CD8-positive, alpha-beta memory T cell (primary cell): ENCODE measurements at regions of chr7 and their contacts with region 1.

Region 1: GRCh38 chr7:143263266-143264195 is at the start of gene GSTK1:
- DNase-seq: peak; percentile 70 to 88 (median 78)
- H3K4me3 ChIP-seq: peak within 1 kb of the TSS; percentile 95
- H3K4me3 Mint-ChIP-seq: peak within 1 kb of the TSS; percentile 88 to 99 (median 97)
- H3K27ac ChIP-seq: peak within 1 kb of the TSS; percentile 83
- H3K27ac Mint-ChIP-seq: peak within 1 kb of the TSS; percentile 63 to 98 (median 94)
- H3K4me1 ChIP-seq: peaks cover 37% of the 10 kb centered on the region
- H3K4me1 Mint-ChIP-seq: peaks cover 49 to 84% (median 66%) of the 10 kb centered on the region in 3 donors
- H3K27me3 ChIP-seq: no peaks in the 10 kb centered on the region
- H3K27me3 Mint-ChIP-seq: no peaks in the 10 kb centered on the region
- total RNA-seq, gene GSTK1: 147 to 151 TPM

Region 2: DNA sequence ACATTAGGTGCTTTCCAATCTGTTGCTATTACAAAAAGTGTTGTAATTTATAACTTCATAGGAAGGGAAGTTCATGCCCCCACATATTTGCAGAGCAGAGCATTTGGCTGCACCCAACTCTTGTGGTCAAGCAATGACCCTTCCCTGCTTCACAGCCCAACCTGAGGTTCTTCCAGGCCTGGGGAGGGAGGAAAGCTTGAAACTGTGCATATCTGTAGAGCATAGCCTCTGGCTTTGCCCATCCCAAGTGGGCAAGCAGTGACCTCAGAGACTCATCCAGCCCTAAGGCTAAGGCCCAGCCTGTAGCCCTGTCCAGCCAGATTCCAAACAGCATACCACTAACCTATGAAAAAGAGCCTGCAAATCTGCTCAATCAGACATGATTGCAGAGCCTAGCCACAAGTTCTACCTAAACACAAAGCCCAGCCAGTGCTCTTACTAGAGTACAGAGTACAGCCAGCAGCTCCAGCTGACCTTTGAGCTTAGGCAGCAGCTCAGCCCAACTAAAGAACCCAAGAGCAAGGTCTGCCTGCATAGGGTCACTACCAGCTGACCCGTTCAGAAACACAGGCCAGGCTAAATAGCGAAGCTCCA is 14.7 kb before region 1 on chr7:
- CTCF ChIA-PET with region 1: interaction called, 69 read pairs
- POLR2A ChIA-PET with region 1: interaction called, 10 read pairs
- DNase-seq: no peak
- H3K4me3 ChIP-seq: no peak overlapping the region
- H3K4me3 Mint-ChIP-seq: peak overlapping the region in 3 of 7 donors; percentile 12 to 19 (median 19)
- H3K27ac ChIP-seq: no peak overlapping the region
- H3K27ac Mint-ChIP-seq: peak overlapping the region in 5 of 8 donors; percentile 23 to 86 (median 60)
- H3K4me1 ChIP-seq: peaks cover 72% of the 10 kb centered on the region
- H3K4me1 Mint-ChIP-seq: peaks cover 84 to 99% (median 97%) of the 10 kb centered on the region in 3 donors
- H3K27me3 ChIP-seq: no peaks in the 10 kb centered on the region
- H3K27me3 Mint-ChIP-seq: no peaks in the 10 kb centered on the region

Region 3: GRCh38 chr7:143279186-143280098 is 15.9 kb after region 1 on chr7:
- CTCF ChIA-PET with region 1: interaction called, 12 read pairs
- POLR2A ChIA-PET with region 1: interaction called, 7 read pairs
- DNase-seq: peak in 2 of 5 donors; percentile 26 to 41
- H3K4me3 ChIP-seq: peak overlapping the region; percentile 8
- H3K4me3 Mint-ChIP-seq: peak overlapping the region; percentile 34 to 85 (median 73)
- H3K27ac ChIP-seq: peak overlapping the region; percentile 33
- H3K27ac Mint-ChIP-seq: peak overlapping the region; percentile 82 to 96 (median 90)
- H3K4me1 ChIP-seq: peaks cover 27% of the 10 kb centered on the region
- H3K4me1 Mint-ChIP-seq: peaks cover 33 to 43% (median 34%) of the 10 kb centered on the region in 3 donors
- H3K27me3 ChIP-seq: no peaks in the 10 kb centered on the region
- H3K27me3 Mint-ChIP-seq: no peaks in the 10 kb centered on the region

Region 4: DNA sequence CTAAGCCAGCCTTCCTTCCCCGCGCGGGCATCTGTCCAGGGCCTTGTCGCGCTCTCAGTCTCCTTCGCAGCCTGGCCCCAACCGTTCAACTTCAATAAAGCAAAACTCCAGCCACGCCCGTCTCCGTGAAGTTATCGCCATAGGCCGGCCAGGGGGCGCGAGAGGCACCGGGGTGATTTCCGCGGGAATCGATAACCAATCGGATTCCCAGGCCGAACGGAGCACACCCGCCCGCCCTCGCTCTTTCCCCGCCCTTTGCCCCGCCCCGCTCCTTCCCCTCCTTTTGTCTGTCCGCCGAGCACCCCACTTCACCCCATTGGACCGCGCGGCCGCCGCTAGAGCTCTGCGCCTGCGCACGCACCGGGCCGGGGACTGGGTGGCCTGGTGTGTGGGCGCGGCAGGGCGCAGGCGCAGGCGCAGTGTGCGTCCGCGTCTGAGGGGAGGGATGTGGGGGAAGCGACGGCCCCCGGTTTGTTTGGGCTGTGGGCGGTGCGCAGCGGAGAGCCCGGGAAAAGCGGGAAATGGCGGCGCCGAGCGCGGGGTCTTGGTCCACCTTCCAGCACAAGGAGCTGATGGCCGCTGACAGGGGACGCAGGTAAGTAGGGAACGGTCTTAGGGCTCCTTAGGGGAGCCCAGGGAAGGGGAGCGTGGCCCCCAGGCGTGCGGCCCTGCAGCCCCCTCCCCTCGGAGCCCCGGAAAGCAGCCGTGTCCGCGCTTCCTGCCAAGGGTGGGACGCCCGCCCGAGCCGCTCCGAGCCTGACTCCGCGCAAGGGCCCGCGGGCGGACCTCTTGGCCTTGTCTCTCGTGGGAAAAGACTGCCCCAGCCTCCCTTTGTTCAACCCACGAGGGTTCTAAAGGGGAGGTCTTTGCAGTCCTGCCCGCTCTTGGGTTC is 24.6 kb after region 1 on chr7 and contains the start of gene CASP2:
- CTCF ChIA-PET with region 1: interaction called, 12 read pairs
- POLR2A ChIA-PET with region 1: interaction called, 9 read pairs
- DNase-seq: peak; percentile 98 to 100 (median 99)
- H3K4me3 ChIP-seq: peak within 1 kb of the TSS; percentile 59
- H3K4me3 Mint-ChIP-seq: peak within 1 kb of the TSS; percentile 88 to 99 (median 95)
- H3K27ac ChIP-seq: peak within 1 kb of the TSS; percentile 83
- H3K27ac Mint-ChIP-seq: peak within 1 kb of the TSS; percentile 85 to 99 (median 91)
- H3K4me1 ChIP-seq: peaks cover 29% of the 10 kb centered on the region
- H3K4me1 Mint-ChIP-seq: peaks cover 50 to 68% (median 61%) of the 10 kb centered on the region in 3 donors
- H3K27me3 ChIP-seq: no peaks in the 10 kb centered on the region
- H3K27me3 Mint-ChIP-seq: no peaks in the 10 kb centered on the region
- total RNA-seq, gene CASP2: 105 to 107 TPM